Naive thymus-derived CD8-positive, alpha-beta T cell (primary cell): ENCODE measurements at regions of chr11 and their contacts with region 1.

Region 1: GRCh38 chr11:67317205-67317887 is 14.0 kb downstream of the SSH3 start:
- DNase-seq: peak; percentile 92 to 99 (median 98)
- ATAC-seq: peak; percentile 88 to 89
- H3K4me3 Mint-ChIP-seq: peak overlapping the region; percentile 93 to 100 (median 99)
- H3K27ac Mint-ChIP-seq: peak overlapping the region; percentile 89 to 98 (median 96)
- H3K4me1 Mint-ChIP-seq: peaks cover 22 to 54% (median 40%) of the 10 kb centered on the region in 4 donors
- H3K27me3 Mint-ChIP-seq: no peaks in the 10 kb centered on the region

Region 2: DNA sequence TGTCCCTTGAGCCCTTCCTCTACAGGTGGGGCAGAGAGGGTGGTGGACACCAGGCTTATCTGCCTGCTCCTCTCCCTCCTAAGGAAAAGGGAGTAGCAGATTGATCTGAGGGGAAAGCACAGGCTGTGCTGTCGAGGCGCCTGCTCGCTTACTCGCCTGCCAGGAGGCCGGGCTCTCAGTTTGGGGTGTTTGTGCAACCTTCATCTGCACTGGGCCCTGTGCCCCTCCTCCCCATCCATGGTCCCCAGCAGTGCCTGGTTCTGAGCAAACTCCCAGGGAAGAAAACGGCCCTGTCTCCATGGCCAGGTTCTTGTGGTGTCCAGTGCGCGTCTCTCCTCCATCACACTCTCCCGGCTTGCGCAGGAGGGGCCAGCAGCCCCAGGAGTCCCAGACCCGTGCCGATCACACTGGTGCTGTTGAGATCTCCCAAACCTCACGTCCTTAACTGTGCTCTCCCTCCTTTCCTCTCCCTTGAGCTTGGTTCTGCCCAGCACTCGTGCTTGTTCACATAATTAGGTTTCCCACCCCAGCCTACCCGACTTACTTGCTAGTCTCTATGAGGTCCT is 62.1 kb before region 1 on chr11:
- POLR2A ChIA-PET with region 1: no interaction called
- DNase-seq: no peak
- ATAC-seq: no peak
- H3K4me3 Mint-ChIP-seq: peak overlapping the region in 2 of 10 donors; percentile 30 to 42
- H3K27ac Mint-ChIP-seq: peak overlapping the region in 9 of 10 donors; percentile 37 to 89 (median 69)
- H3K4me1 Mint-ChIP-seq: peaks cover 22 to 50% (median 33%) of the 10 kb centered on the region in 4 donors
- H3K27me3 Mint-ChIP-seq: no peaks in the 10 kb centered on the region

Region 3: DNA sequence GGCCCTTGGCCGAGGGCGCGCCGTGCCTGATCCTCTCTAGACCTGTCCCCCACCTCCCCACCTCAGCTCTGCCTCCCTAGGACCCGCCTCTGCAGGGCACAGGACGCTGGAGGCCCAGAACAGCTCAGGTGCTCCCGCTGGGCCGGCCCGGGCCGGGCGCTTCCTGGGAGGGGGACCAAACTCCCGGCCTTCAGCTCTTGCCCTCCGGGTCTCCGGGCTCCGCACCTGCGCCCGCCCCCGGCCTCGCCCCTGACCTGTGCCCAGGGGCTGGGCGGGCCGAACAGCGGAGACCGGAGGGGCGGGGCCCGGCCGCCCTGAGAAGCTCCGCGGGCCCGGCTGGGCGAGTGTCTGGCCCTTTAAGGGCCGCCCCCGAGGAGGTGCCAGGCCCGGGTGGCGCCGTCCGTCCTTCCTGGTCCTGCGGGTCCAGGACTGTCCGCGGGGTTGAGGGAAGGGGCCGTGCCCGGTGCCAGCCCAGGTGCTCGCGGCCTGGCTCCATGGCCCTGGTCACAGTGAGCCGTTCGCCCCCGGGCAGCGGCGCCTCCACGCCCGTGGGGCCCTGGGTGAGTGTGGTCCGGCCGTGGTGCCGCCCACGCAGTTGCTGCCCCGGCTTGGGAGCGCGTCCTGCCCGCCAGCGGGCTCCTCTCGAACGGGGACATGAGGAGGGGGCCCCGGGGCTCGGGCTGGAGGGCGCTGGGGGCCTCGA is 14.1 kb before region 1 on chr11 and contains the start of gene SSH3:
- POLR2A ChIA-PET with region 1: interaction called, 85 read pairs
- DNase-seq: peak in 4 of 10 donors; percentile 26 to 49 (median 37)
- ATAC-seq: peak; percentile 67 to 80
- H3K4me3 Mint-ChIP-seq: peak within 1 kb of the TSS; percentile 44 to 80 (median 66)
- H3K27ac Mint-ChIP-seq: peak within 1 kb of the TSS in 9 of 10 donors; percentile 40 to 83 (median 72)
- H3K4me1 Mint-ChIP-seq: peaks cover 9 to 32% (median 20%) of the 10 kb centered on the region in 4 donors
- H3K27me3 Mint-ChIP-seq: no peaks in the 10 kb centered on the region
- polyA plus RNA-seq, gene SSH3: 1.7 to 4.5 (median 3.2) TPM